ENCODE measurements at regions of chr7 and their contacts with region 1.

Region 1: DNA sequence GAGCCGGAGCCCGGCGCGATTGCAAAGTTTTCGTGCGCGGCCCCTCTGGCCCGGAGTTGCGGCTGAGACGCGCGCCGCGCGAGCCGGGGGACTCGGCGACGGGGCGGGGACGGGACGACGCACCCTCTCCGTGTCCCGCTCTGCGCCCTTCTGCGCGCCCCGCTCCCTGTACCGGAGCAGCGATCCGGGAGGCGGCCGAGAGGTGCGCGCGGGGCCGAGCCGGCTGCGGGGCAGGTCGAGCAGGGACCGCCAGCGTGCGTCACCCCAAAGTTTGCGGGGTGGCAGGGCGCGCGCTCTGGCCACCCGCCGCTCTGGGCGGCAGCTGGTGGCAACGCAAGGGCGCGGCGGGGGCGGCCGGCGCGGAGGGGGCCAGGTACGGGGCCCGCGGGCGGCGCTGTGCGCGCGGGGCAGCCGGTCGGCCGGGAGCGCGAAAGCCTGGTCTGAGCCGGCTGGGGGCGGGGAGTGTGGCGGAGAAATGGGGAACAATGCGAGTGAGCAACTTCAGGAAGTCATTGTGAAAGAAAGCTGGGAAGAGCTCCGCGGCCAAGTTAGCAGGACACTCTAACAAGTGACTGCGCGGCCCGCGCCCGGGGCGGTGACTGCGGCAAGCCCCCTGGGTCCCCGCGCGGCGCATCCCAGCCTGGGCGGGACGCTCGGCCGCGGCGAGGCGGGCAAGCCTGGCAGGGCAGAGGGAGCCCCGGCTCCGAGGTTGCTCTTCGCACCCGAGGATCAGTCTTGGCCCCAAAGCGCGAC is at the start of gene IKZF1:
- DNase-seq: peak; percentile 53 to 66 (median 61)
- H3K4me3 ChIP-seq: peak within 1 kb of the TSS; percentile 86 to 96
- H3K4me3 Mint-ChIP-seq: peak within 1 kb of the TSS; percentile 97 to 100 (median 100)
- H3K27ac ChIP-seq: peak within 1 kb of the TSS; percentile 90
- H3K27ac Mint-ChIP-seq: peak within 1 kb of the TSS; percentile 90 to 99 (median 96)
- H3K4me1 ChIP-seq: peaks cover 53% of the 10 kb centered on the region
- H3K4me1 Mint-ChIP-seq: peaks cover 33 to 71% (median 47%) of the 10 kb centered on the region in 4 donors
- H3K27me3 ChIP-seq: no peaks in the 10 kb centered on the region
- H3K27me3 Mint-ChIP-seq: no peaks in the 10 kb centered on the region
- total RNA-seq, gene IKZF1: 474 to 479 TPM

Region 2: GRCh38 chr7:50229964-50230363 is 74.4 kb before region 1 on chr7:
- CTCF ChIA-PET with region 1: interaction called, 25 read pairs
- POLR2A ChIA-PET with region 1: interaction called, 63 read pairs
- intact Hi-C with region 1: loop called (anchors 1 kb)
- DNase-seq: no peak
- H3K4me3 ChIP-seq: no peak overlapping the region
- H3K4me3 Mint-ChIP-seq: no peak overlapping the region
- H3K27ac ChIP-seq: no peak overlapping the region
- H3K27ac Mint-ChIP-seq: no peak overlapping the region
- H3K4me1 ChIP-seq: peaks cover 38% of the 10 kb centered on the region
- H3K4me1 Mint-ChIP-seq: peaks cover 31 to 42% (median 36%) of the 10 kb centered on the region in 4 donors
- H3K27me3 ChIP-seq: no peaks in the 10 kb centered on the region
- H3K27me3 Mint-ChIP-seq: no peaks in the 10 kb centered on the region

Region 3: DNA sequence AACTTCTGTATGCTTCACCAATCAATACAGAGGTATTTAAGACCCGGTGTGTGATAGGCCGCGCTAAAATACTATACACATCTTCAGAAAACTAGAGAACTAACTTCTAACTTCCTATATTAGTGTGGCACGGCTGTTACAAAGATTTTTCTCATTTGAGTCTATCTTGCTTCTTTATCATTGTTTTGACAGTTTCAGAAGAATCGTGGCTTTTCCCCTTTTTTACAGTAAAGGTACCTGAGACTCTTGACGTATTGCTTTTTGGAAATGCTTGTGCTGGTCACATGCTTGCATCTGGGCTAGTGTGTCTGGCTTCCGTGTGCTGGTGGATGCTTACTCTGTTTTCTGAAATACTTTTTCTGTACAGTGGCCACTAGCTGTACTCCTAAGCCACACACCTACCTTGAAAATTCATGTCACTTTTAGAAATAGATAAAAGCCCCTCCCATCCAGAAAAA is 12.9 kb after region 1 on chr7:
- CTCF ChIA-PET with region 1: interaction called, 14 read pairs
- POLR2A ChIA-PET with region 1: interaction called, 945 read pairs
- intact Hi-C with region 1: loop called (anchors 1 kb)
- DNase-seq: peak; percentile 78 to 89 (median 84)
- H3K4me3 ChIP-seq: peak overlapping the region in 1 of 2 donors; percentile 53
- H3K4me3 Mint-ChIP-seq: peak overlapping the region; percentile 78 to 100 (median 92)
- H3K27ac ChIP-seq: peak overlapping the region; percentile 90
- H3K27ac Mint-ChIP-seq: peak overlapping the region in 6 of 7 donors; percentile 93 to 99 (median 98)
- H3K4me1 ChIP-seq: peaks cover 99% of the 10 kb centered on the region
- H3K4me1 Mint-ChIP-seq: peaks cover 73 to 100% (median 86%) of the 10 kb centered on the region in 4 donors
- H3K27me3 ChIP-seq: no peaks in the 10 kb centered on the region
- H3K27me3 Mint-ChIP-seq: no peaks in the 10 kb centered on the region

Region 4: DNA sequence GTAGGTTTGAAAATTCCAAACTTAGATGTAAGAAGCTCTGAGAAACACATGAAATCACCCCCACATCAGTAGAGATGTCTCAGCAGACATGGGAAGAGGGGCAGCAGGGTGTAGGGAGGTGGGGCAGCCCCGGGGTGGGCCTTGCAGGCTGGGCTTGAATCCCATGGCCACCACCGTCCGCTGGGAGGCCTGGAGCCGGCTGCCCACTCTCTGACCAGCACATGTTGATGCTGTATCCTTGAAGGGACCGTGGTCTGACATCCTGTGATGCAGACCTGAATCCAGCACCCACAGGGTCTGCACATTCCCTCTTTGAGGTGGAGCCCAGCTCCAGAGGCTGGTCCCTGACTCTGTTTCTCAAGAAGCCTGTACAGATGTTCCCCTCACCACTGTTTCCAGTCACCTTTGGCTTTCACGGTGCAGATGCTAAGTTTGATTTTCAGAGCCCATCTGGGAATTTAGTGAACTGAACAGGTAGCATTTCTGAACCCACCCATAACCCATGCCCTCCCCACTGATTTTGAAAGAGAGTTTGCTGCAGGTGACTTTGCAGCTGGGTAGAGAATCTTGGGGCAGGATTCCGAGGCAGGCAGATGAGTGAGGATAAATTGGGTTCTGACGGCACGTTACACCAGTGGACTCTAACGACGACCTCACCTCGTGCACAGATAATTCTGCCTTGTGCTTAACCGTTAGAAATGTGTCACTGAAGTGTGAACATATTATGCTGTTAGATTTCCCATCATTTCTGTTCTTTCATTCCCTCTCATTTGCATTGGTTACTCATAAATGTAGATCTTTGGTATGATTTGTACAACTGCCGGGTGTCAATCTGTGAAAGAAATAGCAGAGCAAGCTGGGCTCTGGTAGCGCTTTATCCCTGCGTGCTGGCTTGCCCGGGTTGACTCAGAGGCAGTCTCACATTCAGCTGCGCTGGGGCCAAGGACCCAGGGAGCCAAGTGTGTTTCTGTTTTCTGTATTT is 45.9 kb after region 1 on chr7:
- CTCF ChIA-PET with region 1: interaction called, 336 read pairs
- POLR2A ChIA-PET with region 1: interaction called, 2,673 read pairs
- intact Hi-C with region 1: no loop called
- DNase-seq: peak; percentile 46 to 89 (median 52)
- H3K4me3 ChIP-seq: peak overlapping the region in 1 of 2 donors; percentile 29
- H3K4me3 Mint-ChIP-seq: peak overlapping the region; percentile 69 to 88 (median 78)
- H3K27ac ChIP-seq: peak overlapping the region; percentile 96
- H3K27ac Mint-ChIP-seq: peak overlapping the region in 6 of 7 donors; percentile 97 to 100 (median 98)
- H3K4me1 ChIP-seq: peaks cover 100% of the 10 kb centered on the region
- H3K4me1 Mint-ChIP-seq: peaks cover 79 to 98% (median 92%) of the 10 kb centered on the region in 4 donors
- H3K27me3 ChIP-seq: no peaks in the 10 kb centered on the region
- H3K27me3 Mint-ChIP-seq: no peaks in the 10 kb centered on the region